ENCODE measurements at regions of chr15 and their contacts with region 1.

Region 1: DNA sequence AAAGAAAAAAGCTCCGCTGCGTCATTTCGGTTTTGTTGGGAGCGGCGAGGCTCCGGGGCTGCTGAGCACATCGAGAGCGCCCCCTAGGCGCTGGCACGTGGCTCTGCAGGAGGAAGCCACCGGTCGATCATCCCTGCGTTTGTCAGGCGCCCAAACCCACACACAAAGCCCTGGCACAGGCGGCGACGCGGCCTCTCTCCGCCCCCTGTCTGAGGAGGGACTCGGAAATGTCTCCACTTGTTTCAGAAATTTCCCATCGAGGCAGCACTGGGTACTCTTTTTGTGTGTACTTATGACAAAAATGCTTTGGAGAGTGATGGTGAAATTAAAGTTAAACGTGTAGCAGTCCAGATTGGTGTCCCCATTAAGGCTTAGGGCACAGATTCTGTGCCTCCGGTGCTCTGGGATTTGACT is 407.3 kb upstream of the ONECUT1 start:
- DNase-seq: peak; percentile 78
- H3K4me3 Mint-ChIP-seq: peak overlapping the region; percentile 40
- H3K27ac Mint-ChIP-seq: no peak overlapping the region
- H3K4me1 Mint-ChIP-seq: no peaks in the 10 kb centered on the region
- H3K27me3 Mint-ChIP-seq: no peaks in the 10 kb centered on the region
- CTCF ChIP-seq: peak; percentile 90

Region 2: GRCh38 chr15:53072025-53072471 is 125.4 kb before region 1 on chr15:
- CTCF ChIA-PET with region 1: interaction called, 3 read pairs
- intact Hi-C with region 1: loop called (anchors 1 kb)
- DNase-seq: peak; percentile 96
- H3K4me3 Mint-ChIP-seq: no peak overlapping the region
- H3K27ac Mint-ChIP-seq: no peak overlapping the region
- H3K4me1 Mint-ChIP-seq: peaks cover 22% of the 10 kb centered on the region
- H3K27me3 Mint-ChIP-seq: peaks cover 14% of the 10 kb centered on the region
- CTCF ChIP-seq: no peak